Naive thymus-derived CD4-positive, alpha-beta T cell (primary cell): ENCODE measurements at regions of chr1 and their contacts with region 1.

Region 1: DNA sequence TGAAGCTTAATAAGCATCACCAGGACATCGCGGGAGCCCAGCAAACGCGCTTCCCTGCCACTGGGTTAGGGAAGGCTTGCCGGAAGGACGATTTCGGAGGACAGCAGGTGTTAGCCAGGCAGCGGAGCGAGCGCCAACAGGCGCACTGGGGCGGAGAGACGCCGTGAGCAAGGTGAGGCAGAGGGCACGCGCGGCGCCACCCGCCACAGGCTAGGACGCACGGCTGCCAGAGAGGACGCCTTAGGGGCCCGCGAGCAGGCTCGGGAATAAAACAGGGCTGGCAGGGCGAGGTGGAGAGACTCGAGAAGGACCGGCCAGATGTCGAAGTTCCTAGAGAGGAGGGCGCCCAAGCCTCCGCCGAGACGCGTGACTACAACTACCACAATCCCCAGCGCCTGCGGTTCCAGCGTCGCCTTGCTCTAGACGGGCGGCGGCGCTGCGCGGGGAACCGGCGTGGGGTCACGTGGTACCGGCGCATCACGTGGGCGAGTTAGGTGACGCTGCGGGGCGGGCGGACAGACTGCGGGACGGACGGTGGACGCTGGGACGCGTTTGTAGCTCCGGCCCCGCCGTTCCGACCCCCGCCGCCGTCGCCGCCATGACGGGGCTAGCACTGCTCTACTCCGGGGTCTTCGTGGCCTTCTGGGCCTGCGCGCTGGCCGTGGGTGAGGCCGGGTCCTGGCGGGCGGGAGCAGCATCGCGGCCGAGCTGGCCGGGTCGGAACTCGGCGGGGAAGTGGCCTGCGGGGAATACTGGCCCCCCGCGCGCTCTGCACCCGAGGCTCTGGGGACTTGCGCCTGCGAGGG is at the start of gene ATP6V0B:
- DNase-seq: peak; percentile 83 to 98 (median 90)
- ATAC-seq: peak; percentile 85
- H3K4me3 ChIP-seq: peak within 1 kb of the TSS; percentile 93
- H3K4me3 Mint-ChIP-seq: peak within 1 kb of the TSS; percentile 88 to 98 (median 94)
- H3K27ac ChIP-seq: peak within 1 kb of the TSS; percentile 91
- H3K27ac Mint-ChIP-seq: peak within 1 kb of the TSS; percentile 90 to 99 (median 94)
- H3K4me1 ChIP-seq: peaks cover 27 to 29% of the 10 kb centered on the region in 2 donors
- H3K4me1 Mint-ChIP-seq: peaks cover 51 to 69% (median 58%) of the 10 kb centered on the region in 7 donors
- H3K27me3 ChIP-seq: no peaks in the 10 kb centered on the region
- H3K27me3 Mint-ChIP-seq: peaks cover 0 to 5% (median 0%) of the 10 kb centered on the region in 5 donors
- total RNA-seq, gene ATP6V0B: 47.3 to 152 (median 69.3) TPM

Region 2: GRCh38 chr1:42846257-42847110 is 1128.2 kb before region 1 on chr1 and contains the start of gene ZNF691:
- CTCF ChIA-PET with region 1: no interaction called
- POLR2A ChIA-PET with region 1: no interaction called
- intact Hi-C with region 1: loop called in 1 of 2 experiments (anchors 10 kb)
- DNase-seq: peak; percentile 51 to 91 (median 84)
- ATAC-seq: peak; percentile 99
- H3K4me3 ChIP-seq: peak within 1 kb of the TSS; percentile 97
- H3K4me3 Mint-ChIP-seq: peak within 1 kb of the TSS; percentile 84 to 100 (median 96)
- H3K27ac ChIP-seq: peak within 1 kb of the TSS; percentile 72
- H3K27ac Mint-ChIP-seq: peak within 1 kb of the TSS; percentile 71 to 95 (median 85)
- H3K4me1 ChIP-seq: peaks cover 11 to 22% of the 10 kb centered on the region in 2 donors
- H3K4me1 Mint-ChIP-seq: peaks cover 19 to 38% (median 31%) of the 10 kb centered on the region in 7 donors
- H3K27me3 ChIP-seq: no peaks in the 10 kb centered on the region
- H3K27me3 Mint-ChIP-seq: no peaks in the 10 kb centered on the region
- total RNA-seq, gene ZNF691: 3.5 to 17.2 (median 12.8) TPM

Region 3: GRCh38 chr1:43706598-43707495 is 267.8 kb before region 1 on chr1:
- CTCF ChIA-PET with region 1: no interaction called
- POLR2A ChIA-PET with region 1: no interaction called
- intact Hi-C with region 1: loop called (anchors 2 to 10 kb)
- DNase-seq: peak; percentile 84 to 94 (median 89)
- ATAC-seq: peak; percentile 98
- H3K4me3 ChIP-seq: peak overlapping the region; percentile 92
- H3K4me3 Mint-ChIP-seq: peak overlapping the region; percentile 82 to 90 (median 88)
- H3K27ac ChIP-seq: peak overlapping the region; percentile 79
- H3K27ac Mint-ChIP-seq: peak overlapping the region in 7 of 9 donors; percentile 32 to 87 (median 79)
- H3K4me1 ChIP-seq: peaks cover 7 to 10% of the 10 kb centered on the region in 2 donors
- H3K4me1 Mint-ChIP-seq: peaks cover 7 to 46% (median 27%) of the 10 kb centered on the region in 7 donors
- H3K27me3 ChIP-seq: no peaks in the 10 kb centered on the region
- H3K27me3 Mint-ChIP-seq: no peaks in the 10 kb centered on the region

Region 4: DNA sequence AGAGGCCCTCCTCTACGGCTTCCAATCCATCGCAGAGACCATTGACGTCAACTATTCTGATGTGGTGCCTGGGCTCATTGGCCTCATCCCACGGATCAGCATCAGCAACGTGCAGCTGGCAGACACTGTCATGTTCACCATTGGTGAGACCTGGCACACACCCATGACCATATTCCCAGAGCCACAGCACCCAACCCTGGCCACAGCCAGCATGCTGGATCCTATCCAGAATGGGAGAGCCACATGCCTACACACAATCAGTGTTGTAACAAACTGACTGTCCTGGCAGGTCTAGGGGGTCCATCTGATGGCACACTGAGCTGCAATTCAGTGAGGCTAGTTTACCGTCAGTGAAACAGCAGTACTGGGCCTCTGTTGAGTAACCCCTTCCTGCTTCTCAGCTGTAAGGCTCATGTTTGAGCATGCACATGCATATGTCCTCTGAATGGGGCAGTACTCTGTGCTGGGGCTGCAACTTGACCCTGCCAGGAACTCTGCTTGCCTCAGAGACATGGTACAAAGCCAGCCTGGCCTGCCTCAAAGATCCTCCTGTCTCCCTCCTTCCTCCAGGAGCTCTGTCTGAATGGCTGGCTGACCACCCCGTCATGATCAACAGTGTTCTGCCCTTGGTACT is 17.1 kb before region 1 on chr1:
- CTCF ChIA-PET with region 1: no interaction called
- POLR2A ChIA-PET with region 1: no interaction called
- intact Hi-C with region 1: no loop called
- DNase-seq: no peak
- ATAC-seq: no peak
- H3K4me3 ChIP-seq: no peak overlapping the region
- H3K4me3 Mint-ChIP-seq: no peak overlapping the region
- H3K27ac ChIP-seq: no peak overlapping the region
- H3K27ac Mint-ChIP-seq: peak overlapping the region in 1 of 9 donors; percentile 70
- H3K4me1 ChIP-seq: no peaks in the 10 kb centered on the region
- H3K4me1 Mint-ChIP-seq: peaks cover 0 to 6% (median 0%) of the 10 kb centered on the region in 7 donors
- H3K27me3 ChIP-seq: no peaks in the 10 kb centered on the region
- H3K27me3 Mint-ChIP-seq: no peaks in the 10 kb centered on the region

Region 5: DNA sequence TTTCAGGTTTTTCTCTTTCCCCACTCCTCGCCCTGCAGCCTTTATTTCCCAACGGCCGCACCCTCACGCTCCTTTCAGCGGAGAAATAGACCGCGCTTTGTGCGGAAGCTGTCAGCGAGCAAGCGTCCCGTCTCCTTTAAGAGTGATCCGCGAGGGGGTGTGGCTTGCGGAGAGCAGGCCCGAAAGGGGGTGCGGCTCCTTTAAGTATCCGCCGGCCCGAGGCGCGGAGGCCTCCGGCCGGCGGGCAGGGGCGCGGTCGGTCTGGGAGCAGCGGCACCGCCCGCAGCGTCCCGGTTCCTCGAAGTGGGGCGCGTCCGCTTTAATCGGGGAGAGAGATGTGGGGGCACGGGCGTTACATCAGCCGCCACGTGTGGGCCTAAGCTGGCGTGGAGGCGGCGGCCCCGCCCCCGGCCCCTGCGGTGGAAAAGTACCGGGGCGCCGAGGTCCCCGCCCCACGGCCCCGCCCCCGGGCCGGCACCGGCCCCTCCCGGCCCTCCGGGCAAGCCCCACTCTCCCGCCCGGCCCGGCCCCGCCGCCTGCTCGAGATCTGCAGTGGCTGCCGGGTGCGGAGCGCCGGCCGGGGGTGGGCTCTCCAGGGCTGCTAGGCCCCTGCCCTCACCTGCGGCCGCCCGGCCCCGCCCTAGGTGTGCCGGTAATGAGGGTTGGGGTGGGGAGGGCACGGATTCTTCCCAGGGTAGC is 55.4 kb after region 1 on chr1:
- CTCF ChIA-PET with region 1: no interaction called
- POLR2A ChIA-PET with region 1: interaction called, 3 read pairs
- intact Hi-C with region 1: loop called (anchors 1 kb)
- DNase-seq: peak; percentile 73 to 90 (median 85)
- ATAC-seq: peak; percentile 90
- H3K4me3 ChIP-seq: peak overlapping the region; percentile 61
- H3K4me3 Mint-ChIP-seq: peak overlapping the region; percentile 94 to 99 (median 97)
- H3K27ac ChIP-seq: peak overlapping the region; percentile 78
- H3K27ac Mint-ChIP-seq: peak overlapping the region; percentile 92 to 98 (median 94)
- H3K4me1 ChIP-seq: peaks cover 0 to 7% of the 10 kb centered on the region in 2 donors
- H3K4me1 Mint-ChIP-seq: peaks cover 16 to 40% (median 23%) of the 10 kb centered on the region in 7 donors
- H3K27me3 ChIP-seq: no peaks in the 10 kb centered on the region
- H3K27me3 Mint-ChIP-seq: no peaks in the 10 kb centered on the region